Right ventricle myocardium inferior (tissue), 1 donor: ENCODE measurements at regions of chr10 and their contacts with region 1.

Region 1: GRCh38 chr10:100878291-100878910 is 34.4 kb upstream of the SLF2 start:
- DNase-seq: peak; percentile 54
- ATAC-seq: peak; percentile 76

Region 2: DNA sequence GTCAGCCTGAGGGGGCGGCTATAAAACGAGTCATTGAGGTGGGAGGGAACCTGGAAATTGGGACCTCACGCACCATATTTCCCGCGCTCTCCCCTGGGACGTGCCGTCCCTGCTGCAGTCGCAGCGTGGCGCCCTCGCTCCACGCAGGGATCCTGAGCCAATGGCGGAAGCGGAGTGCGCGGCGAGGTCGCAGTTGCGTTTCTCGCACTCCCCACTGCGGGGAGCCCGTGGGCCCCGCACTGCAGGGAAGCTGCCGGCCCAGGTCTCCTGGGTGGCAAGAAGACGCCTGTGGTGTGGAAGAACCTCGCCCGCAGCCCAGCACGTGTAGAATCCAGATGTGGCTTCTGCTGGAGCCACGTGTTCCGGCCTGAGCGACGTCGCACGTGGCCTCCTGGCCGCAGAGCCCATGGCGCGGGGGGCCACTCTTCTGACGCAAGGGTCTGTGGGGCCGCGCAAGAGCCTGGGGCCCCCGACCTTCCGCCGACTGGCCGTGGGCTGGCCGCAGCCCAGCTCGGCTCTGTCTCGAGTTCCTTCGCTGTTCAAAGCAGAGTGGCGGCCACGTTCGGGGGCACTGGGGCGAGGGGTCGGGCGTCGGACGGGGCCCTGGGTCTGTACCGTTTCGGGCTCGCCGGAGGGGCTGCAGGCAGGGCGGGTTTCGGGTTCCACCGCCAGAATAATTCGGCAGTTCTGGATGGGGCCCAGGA is 316.2 kb before region 1 on chr10:
- intact Hi-C with region 1: loop called (anchors 5 kb)
- DNase-seq: peak; percentile 82
- ATAC-seq: peak; percentile 75

Region 3: DNA sequence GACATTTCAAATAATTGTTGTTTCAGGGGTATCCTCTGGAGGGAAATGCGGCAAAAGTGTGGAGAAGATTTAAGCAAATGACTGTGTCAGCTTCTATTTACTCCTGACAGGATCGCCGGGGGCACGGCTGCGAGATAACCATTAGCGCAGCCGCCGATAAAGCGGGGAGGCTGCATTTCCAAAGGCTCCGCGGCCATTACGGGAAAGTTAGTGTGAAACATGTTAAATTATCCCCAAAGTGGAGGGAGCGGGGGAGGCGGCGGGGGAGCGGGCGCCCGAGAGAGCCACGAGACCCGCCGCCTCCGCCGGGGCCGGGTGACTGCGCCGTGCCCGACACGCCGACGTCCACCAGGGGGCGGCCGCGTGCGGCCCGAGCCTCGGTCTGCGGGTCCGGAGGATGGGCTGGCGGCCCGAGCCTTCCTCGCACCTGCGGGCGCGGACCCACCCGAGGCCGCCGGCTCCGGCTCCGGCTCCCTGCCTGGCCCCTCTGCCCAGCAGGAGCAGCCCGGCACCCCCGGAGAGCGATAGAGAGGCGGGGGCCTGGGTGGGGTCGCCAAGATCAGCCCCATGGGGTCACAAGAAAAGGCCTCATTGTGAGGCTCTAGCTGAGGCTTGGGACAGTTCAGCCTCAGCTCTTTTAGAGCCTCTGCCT is 207.4 kb before region 1 on chr10:
- intact Hi-C with region 1: loop called (anchors 10 kb)
- DNase-seq: no peak
- ATAC-seq: no peak

Region 4: GRCh38 chr10:100705139-100705538 is 173.3 kb before region 1 on chr10:
- intact Hi-C with region 1: no loop called
- DNase-seq: no peak
- ATAC-seq: no peak